Psoas muscle (tissue), 8 donors: ENCODE measurements at regions of chr1 and their contacts with region 1.

Region 1: DNA sequence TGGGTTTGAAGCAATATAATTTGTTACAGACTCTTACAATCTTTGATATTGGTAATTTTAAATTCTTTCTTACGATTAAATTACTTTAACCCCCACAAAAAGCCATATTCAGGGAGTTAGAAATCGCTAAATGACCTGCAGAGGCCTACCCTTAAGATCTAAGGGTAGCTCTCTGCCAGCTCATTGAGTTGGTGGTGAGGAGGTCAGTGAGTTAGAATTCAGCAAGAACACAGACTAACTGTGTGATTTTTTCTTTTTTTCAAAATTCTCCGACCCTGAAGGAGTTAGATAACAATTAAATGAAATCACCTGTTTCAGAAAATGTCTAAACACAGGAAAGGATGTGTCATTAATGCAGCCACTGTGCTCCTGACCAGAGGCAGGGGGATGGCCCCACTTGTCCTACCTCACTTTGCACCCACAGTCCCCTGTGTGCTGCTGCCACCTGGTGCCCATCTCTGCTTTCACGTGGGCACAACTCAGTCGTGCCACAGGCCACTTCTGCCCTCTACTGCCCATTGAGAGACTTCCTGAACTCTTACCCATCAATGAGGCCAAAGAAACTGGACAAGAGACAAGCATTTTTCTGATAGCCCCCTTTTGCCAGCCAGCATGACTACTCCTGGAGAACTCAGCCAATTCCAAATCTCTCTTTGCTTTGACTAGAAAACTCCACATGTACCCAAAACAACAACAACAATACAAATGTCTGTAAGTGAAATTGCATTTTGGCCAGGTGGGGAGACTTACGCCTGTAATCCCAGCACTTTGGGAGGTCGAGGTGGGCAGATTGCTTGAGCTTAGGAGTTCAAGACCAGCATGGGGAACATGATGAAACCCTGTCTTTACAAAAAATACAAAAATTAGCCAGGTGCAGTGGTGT is 8.4 kb downstream of the CFAP45 start:
- DNase-seq: peak; percentile 79 to 88
- ATAC-seq: peak; percentile 97 to 99 (median 98)
- H3K4me3 ChIP-seq: no peak overlapping the region
- H3K27ac ChIP-seq: no peak overlapping the region
- H3K4me1 ChIP-seq: peaks cover 5% of the 10 kb centered on the region
- H3K27me3 ChIP-seq: no peaks in the 10 kb centered on the region
- CTCF ChIP-seq: peak; percentile 97

Region 2: GRCh38 chr1:159214149-159214760 is 677.3 kb before region 1 on chr1:
- intact Hi-C with region 1: loop called in 1 of 2 experiments (anchors 5 kb)
- DNase-seq: no peak
- ATAC-seq: peak in 3 of 4 donors; percentile 67 to 74 (median 73)
- H3K4me3 ChIP-seq: no peak overlapping the region
- H3K27ac ChIP-seq: no peak overlapping the region
- H3K4me1 ChIP-seq: no peaks in the 10 kb centered on the region
- H3K27me3 ChIP-seq: peaks cover 0 to 18% (median 3%) of the 10 kb centered on the region in 3 donors
- CTCF ChIP-seq: peak; percentile 80